CD8-positive, alpha-beta T cell (primary cell): ENCODE measurements at regions of chr11 and their contacts with region 1.

Region 1: GRCh38 chr11:13335319-13335718 is 57.7 kb downstream of the BMAL1 start:
- DNase-seq: peak; percentile 57 to 82 (median 70)
- ATAC-seq: peak; percentile 70
- H3K4me3 ChIP-seq: no peak overlapping the region
- H3K4me3 Mint-ChIP-seq: no peak overlapping the region
- H3K27ac ChIP-seq: no peak overlapping the region
- H3K27ac Mint-ChIP-seq: peak overlapping the region; percentile 15
- H3K4me1 ChIP-seq: peaks cover 52% of the 10 kb centered on the region
- H3K4me1 Mint-ChIP-seq: peaks cover 81% of the 10 kb centered on the region
- H3K27me3 ChIP-seq: no peaks in the 10 kb centered on the region
- H3K27me3 Mint-ChIP-seq: no peaks in the 10 kb centered on the region
- CTCF ChIP-seq: peak; percentile 86

Region 2: GRCh38 chr11:13183094-13183825 is 152.1 kb before region 1 on chr11:
- CTCF ChIA-PET with region 1: interaction called, 8 read pairs
- POLR2A ChIA-PET with region 1: no interaction called
- intact Hi-C with region 1: loop called in 1 of 2 experiments (anchors 2 kb)
- DNase-seq: peak in 2 of 9 experiments; percentile 39 to 49
- ATAC-seq: no peak
- H3K4me3 ChIP-seq: no peak overlapping the region
- H3K4me3 Mint-ChIP-seq: no peak overlapping the region
- H3K27ac ChIP-seq: no peak overlapping the region
- H3K27ac Mint-ChIP-seq: no peak overlapping the region
- H3K4me1 ChIP-seq: peaks cover 4% of the 10 kb centered on the region
- H3K4me1 Mint-ChIP-seq: peaks cover 6% of the 10 kb centered on the region
- H3K27me3 ChIP-seq: peaks cover 0 to 3% of the 10 kb centered on the region in 2 experiments
- H3K27me3 Mint-ChIP-seq: peaks cover 19% of the 10 kb centered on the region
- CTCF ChIP-seq: peak; percentile 36

Region 3: DNA sequence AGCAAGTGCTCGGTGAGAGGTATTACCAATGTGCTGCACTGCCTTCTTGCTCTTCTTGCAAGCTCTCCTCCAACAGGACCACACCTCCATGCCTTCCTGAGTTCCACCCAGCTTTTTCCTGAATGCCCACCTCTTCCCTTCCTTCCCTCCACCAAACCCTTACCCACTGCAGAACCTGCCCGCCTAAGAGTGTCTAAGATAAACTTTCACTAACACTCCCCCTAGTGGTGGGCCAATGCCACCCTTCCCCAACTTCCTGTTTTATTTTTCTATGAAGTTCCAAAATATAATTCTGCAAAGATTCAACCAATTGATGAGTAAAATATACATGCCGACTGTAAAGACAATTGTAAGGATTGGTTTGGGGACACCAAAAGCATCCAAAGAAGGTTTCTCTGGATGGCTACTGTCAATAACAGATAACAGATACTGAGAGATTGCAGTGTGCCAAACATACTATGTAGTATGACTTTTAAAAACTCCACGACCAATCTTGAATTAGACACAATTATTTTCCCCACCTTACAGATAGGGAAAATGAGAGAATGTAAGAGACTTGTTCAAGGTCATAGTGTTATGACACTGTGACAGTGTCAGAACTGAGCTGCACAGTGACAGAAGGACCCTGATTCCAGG is 96.3 kb before region 1 on chr11:
- CTCF ChIA-PET with region 1: interaction called, 27 read pairs
- POLR2A ChIA-PET with region 1: no interaction called
- intact Hi-C with region 1: no loop called
- DNase-seq: peak; percentile 13 to 70 (median 56)
- ATAC-seq: peak; percentile 79
- H3K4me3 ChIP-seq: no peak overlapping the region
- H3K4me3 Mint-ChIP-seq: no peak overlapping the region
- H3K27ac ChIP-seq: no peak overlapping the region
- H3K27ac Mint-ChIP-seq: no peak overlapping the region
- H3K4me1 ChIP-seq: no peaks in the 10 kb centered on the region
- H3K4me1 Mint-ChIP-seq: peaks cover 1% of the 10 kb centered on the region
- H3K27me3 ChIP-seq: no peaks in the 10 kb centered on the region
- H3K27me3 Mint-ChIP-seq: peaks cover 13% of the 10 kb centered on the region
- CTCF ChIP-seq: peak; percentile 86

Region 4: DNA sequence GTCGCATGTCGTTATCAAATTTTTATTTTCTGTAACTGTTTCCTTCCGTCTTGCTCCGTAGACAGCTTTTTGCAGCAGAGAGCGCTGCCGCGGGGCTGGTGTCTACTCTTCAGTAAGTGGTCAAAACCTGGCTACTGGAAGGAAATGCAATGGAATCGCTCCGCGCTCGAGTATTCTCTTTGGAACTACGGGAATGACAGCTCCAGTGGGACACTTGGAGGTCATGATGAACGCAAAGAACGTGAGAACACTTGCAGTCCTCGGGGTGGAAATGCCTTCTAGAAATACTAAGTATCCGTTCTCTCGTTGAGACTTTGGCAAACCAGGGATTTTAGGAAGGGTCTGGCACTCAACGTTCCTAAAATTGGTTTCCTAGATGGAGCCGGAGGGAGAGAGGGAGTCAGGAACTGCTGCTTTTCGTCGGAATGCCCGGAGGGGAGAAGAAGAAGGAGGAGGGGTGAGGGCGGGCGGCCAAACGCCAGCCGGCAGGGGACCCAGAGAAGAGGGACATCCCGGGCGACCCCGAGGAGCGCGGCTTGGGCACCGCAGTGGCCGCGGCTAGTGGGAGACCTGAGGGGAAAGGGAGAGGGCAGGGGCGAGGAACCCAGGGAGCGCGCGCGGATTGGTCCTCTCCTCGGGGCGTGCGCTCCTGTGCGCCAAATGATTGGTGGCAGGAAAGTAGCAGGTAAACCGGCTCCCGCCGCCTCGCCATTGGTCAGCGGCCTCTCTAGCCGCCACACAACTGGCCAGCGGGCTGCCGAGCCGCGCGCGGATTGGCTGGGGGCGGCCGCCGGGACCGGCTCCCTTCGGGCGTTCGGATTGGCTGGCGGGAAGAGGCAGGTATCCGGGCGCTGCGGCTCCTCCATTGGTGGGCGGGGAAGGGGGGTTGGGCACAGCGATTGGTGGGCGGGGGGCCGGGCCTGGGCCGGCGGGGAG is 58.2 kb before region 1 on chr11:
- CTCF ChIA-PET with region 1: interaction called, 16 read pairs
- POLR2A ChIA-PET with region 1: interaction called, 4 read pairs
- intact Hi-C with region 1: loop called (anchors 1 to 2 kb)
- DNase-seq: peak; percentile 95 to 98 (median 96)
- ATAC-seq: peak; percentile 80
- H3K4me3 ChIP-seq: peak overlapping the region; percentile 96 to 98
- H3K4me3 Mint-ChIP-seq: peak overlapping the region; percentile 96
- H3K27ac ChIP-seq: peak overlapping the region; percentile 56 to 82
- H3K27ac Mint-ChIP-seq: peak overlapping the region; percentile 92
- H3K4me1 ChIP-seq: peaks cover 34% of the 10 kb centered on the region
- H3K4me1 Mint-ChIP-seq: peaks cover 41% of the 10 kb centered on the region
- H3K27me3 ChIP-seq: no peaks in the 10 kb centered on the region
- H3K27me3 Mint-ChIP-seq: no peaks in the 10 kb centered on the region
- CTCF ChIP-seq: no peak

Region 5: GRCh38 chr11:13316528-13316961 is 18.8 kb before region 1 on chr11:
- CTCF ChIA-PET with region 1: interaction called, 21 read pairs
- POLR2A ChIA-PET with region 1: interaction called, 3 read pairs
- intact Hi-C with region 1: no loop called
- DNase-seq: no peak
- ATAC-seq: no peak
- H3K4me3 ChIP-seq: no peak overlapping the region
- H3K4me3 Mint-ChIP-seq: no peak overlapping the region
- H3K27ac ChIP-seq: no peak overlapping the region
- H3K27ac Mint-ChIP-seq: no peak overlapping the region
- H3K4me1 ChIP-seq: peaks cover 47% of the 10 kb centered on the region
- H3K4me1 Mint-ChIP-seq: peaks cover 87% of the 10 kb centered on the region
- H3K27me3 ChIP-seq: no peaks in the 10 kb centered on the region
- H3K27me3 Mint-ChIP-seq: no peaks in the 10 kb centered on the region
- CTCF ChIP-seq: no peak